Dendritic cell treated with granulocyte-macrophage colony-stimulating factor and Interleukin-4, amounts not matched to agents 40 ng/mL and 50 ng/mL, for 4 days (primary cell): ENCODE measurements at regions of chr10 and their contacts with region 1.

Region 1: DNA sequence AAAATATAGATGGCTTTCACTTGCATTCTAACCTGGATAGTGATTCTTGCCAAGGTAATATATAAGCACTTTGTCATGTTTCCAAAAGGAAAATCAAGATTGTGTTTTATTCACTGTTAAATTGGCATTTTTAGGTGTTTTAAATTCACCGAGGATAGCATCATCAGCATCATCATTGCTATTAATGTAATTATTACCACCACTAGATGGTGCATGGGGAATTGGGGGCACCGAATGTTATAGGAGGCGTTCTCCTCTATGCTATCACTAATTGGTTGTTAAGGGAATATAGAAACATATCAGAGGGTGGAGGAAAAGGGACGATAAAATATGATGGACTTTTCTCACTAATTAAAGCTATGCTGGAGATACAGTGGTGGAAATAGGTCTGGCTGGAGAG is 95.5 kb downstream of the CELF2 start:
- H3K4me3 Mint-ChIP-seq: no peak overlapping the region
- H3K27ac Mint-ChIP-seq: no peak overlapping the region
- H3K4me1 Mint-ChIP-seq: peaks cover 5% of the 10 kb centered on the region
- H3K27me3 Mint-ChIP-seq: no peaks in the 10 kb centered on the region

Region 2: GRCh38 chr10:10831085-10831484 is 282.1 kb before region 1 on chr10:
- intact Hi-C with region 1: no loop called
- H3K4me3 Mint-ChIP-seq: no peak overlapping the region
- H3K27ac Mint-ChIP-seq: no peak overlapping the region
- H3K4me1 Mint-ChIP-seq: no peaks in the 10 kb centered on the region
- H3K27me3 Mint-ChIP-seq: no peaks in the 10 kb centered on the region

Region 3: GRCh38 chr10:11270135-11270857 is 157.1 kb after region 1 on chr10:
- intact Hi-C with region 1: loop called (anchors 2 kb)
- H3K4me3 Mint-ChIP-seq: no peak overlapping the region
- H3K27ac Mint-ChIP-seq: no peak overlapping the region
- H3K4me1 Mint-ChIP-seq: peaks cover 17% of the 10 kb centered on the region
- H3K27me3 Mint-ChIP-seq: no peaks in the 10 kb centered on the region